Posterior cingulate gyrus (tissue), 11 donors: ENCODE measurements at regions of chr11 and their contacts with region 1.

Region 1: DNA sequence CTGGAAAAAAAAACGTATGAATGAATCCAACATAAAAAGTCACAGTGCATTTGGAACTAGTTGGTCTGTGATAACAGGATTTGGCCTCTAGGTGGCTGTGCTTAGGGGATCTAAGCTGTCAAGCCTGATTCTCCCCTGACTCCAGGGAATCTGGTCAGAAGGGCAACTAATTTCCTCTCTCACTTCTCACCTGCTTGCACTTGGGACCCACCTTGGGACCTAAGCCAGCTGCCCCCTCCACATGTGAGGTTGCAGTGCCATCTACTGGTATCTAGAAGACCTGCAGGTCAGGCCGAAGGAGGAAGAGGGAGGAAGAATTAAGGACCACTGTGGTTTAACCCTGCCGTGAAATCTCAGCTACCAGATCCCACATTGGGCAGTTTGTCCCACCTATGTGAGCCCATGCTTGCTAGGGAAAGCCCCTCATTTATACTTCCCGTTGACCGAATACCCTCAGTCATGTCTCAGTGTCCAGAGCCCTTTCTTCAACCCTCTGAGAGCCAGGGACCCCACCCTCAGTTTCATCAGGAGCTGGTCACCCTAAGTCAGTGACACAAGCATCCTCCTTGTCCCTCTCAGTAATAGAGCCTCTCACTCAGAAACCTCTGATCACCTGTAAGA is 33.2 kb upstream of the CAVIN3 start:
- DNase-seq: peak in 5 of 10 donors; percentile 16 to 35 (median 32)

Region 2: DNA sequence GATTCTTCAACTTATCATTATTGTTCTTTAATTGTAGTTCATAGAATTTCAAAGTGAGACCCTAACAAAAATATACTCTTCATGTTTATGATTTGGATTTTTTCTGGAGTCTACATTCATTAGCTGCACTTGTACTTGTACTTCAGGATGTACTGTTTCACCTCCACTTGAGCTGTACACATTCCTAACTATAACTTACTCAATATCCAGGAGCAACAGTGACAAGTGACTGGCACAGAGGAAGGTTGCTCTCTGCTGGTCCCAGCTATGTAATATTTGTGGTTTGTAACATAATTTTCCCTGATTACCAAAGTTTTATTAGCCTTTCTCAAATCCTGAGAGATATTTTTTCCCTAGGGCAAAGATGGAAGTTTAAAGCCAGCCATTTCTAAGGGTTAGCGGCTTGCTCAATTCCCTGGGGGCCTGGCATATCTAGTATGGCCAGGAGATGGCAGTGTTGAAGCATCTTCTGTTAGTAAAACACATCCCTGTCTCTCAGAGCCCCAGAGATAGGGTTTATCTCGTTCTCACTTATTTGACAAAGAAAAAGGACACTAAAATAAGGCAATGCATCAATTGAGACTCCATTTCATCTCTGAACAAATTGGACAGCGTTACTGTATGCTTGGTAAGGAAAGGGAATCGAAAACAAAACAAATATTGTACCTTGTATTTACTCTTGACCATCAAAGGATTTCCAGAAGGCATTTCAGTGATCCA is 1229.5 kb before region 1 on chr11:
- intact Hi-C with region 1: loop called (anchors 10 kb)
- DNase-seq: peak in 9 of 10 donors; percentile 51 to 89 (median 70)

Region 3: GRCh38 chr11:6170226-6170625 is 183.3 kb before region 1 on chr11 and contains the start of gene OR52B2:
- intact Hi-C with region 1: no loop called
- DNase-seq: no peak

Region 4: DNA sequence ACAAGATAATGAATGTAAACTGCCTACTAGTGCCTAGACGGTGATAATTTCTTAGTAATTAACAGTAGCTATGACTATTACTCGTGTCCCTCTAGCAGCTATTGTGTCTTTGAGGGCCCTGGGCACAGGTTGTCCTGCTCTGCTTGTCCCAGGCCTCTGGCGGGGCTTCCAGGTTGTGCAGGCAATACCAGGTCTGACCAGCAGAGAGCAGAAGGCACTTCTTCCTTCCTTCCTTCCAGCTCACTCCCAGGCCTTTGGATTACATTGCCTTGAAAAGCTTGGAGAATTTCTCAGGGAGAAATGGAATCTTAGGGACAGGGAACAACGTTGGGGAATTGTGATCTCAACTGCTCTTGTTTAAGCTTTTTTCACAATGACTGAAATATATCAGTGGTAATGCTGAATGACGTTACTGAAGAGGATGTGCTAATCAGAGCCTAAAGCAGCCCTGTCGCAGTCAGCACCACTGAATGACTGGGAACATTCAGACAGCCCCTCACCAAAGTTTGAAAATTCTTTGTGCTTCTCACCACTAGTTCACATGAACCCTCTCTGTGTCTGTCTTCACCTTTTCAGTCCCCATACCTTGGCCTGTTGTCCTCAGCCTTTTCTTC is 102.2 kb before region 1 on chr11:
- intact Hi-C with region 1: loop called (anchors 1 kb)
- DNase-seq: peak in 9 of 10 donors; percentile 33 to 92 (median 63)